SK-N-SH (cell line): ENCODE measurements at regions of chr1 and their contacts with region 1.

Region 1: DNA sequence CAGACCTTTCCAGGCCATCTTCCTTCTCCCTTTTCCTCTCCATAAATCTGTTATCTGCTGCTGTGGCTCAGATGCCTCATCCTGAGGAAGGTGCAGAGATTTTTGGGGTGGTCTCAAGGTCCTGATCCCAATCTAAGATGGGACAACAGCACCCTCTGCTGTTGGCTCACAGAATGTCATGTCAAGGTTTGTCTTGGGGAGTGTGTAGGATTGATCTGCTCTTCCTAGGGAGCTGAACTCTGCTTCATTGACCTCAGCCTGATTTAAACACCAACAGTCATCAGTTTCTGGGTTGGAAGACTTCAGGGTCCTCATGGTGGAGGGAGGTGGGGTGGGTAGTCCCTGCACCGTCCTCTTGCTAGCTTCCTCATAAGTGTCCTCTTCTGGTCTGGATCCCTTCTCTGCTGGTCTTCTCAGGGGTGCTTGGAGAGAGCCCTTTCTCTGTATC is 62.8 kb upstream of the LAX1 start:
- DNase-seq: peak; percentile 74
- H3K4me3 ChIP-seq: no peak overlapping the region
- H3K27ac ChIP-seq: peak overlapping the region in 1 of 2 experiments; percentile 47; a peak in 1 of 4 replicates
- H3K4me1 ChIP-seq: no peaks in the 10 kb centered on the region
- H3K27me3 ChIP-seq: no peaks in the 10 kb centered on the region
- CTCF ChIP-seq: peak; percentile 91
- EP300 ChIP-seq: no peak
- RAD21 ChIP-seq: peak; percentile 98

Region 2: DNA sequence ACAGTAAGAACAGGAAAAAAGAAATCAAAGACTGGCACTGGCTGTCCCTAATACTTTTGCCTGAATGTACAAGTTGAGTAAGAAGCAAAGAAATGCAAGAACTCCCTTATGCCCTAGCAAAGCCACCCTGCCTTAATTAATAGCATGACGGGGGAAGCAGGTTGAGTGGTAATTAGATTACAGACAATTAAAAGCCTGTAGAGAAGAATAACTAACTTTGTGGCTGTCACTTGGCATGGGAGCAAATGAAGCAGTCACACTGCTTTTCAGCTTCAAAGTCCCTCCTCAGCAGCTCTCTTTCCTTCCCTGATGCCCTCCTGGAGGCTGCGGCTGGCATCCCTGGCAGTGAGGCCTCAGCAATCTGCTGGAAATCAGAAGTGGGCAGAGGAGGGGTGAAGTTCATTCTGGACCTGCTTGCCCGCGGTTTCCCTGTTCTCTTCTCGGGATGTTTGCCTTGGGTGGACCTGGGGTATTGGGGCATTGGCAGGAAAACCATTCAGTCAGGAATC is 204.8 kb before region 1 on chr1:
- CTCF ChIA-PET with region 1: interaction called, 222 read pairs
- POLR2A ChIA-PET with region 1: no interaction called
- DNase-seq: no peak
- H3K4me3 ChIP-seq: no peak overlapping the region
- H3K27ac ChIP-seq: no peak overlapping the region
- H3K4me1 ChIP-seq: peaks cover 0 to 8% of the 10 kb centered on the region in 2 experiments; a peak in 1 of 4 replicates
- H3K27me3 ChIP-seq: no peaks in the 10 kb centered on the region
- CTCF ChIP-seq: no peak
- EP300 ChIP-seq: no peak
- RAD21 ChIP-seq: no peak

Region 3: GRCh38 chr1:203512830-203513611 is 189.1 kb before region 1 on chr1:
- CTCF ChIA-PET with region 1: interaction called, 222 read pairs
- POLR2A ChIA-PET with region 1: no interaction called
- DNase-seq: no peak
- H3K4me3 ChIP-seq: no peak overlapping the region
- H3K27ac ChIP-seq: peak overlapping the region; percentile 72 to 99
- H3K4me1 ChIP-seq: peaks cover 28 to 35% of the 10 kb centered on the region in 2 experiments
- H3K27me3 ChIP-seq: no peaks in the 10 kb centered on the region
- CTCF ChIP-seq: no peak
- EP300 ChIP-seq: peak in 1 of 2 experiments; percentile 95; a peak in 2 of 4 replicates
- RAD21 ChIP-seq: no peak

Region 4: GRCh38 chr1:203625628-203626019 is 76.5 kb before region 1 on chr1:
- CTCF ChIA-PET with region 1: interaction called, 88 read pairs
- POLR2A ChIA-PET with region 1: interaction called, 4 read pairs
- DNase-seq: peak; percentile 66
- H3K4me3 ChIP-seq: no peak overlapping the region
- H3K27ac ChIP-seq: peak overlapping the region; percentile 86 to 91; a peak in 3 of 4 replicates
- H3K4me1 ChIP-seq: peaks cover 25 to 28% of the 10 kb centered on the region in 2 experiments; a peak in 3 of 4 replicates
- H3K27me3 ChIP-seq: no peaks in the 10 kb centered on the region
- CTCF ChIP-seq: peak; percentile 55
- EP300 ChIP-seq: no peak
- RAD21 ChIP-seq: peak; percentile 90

Region 5: DNA sequence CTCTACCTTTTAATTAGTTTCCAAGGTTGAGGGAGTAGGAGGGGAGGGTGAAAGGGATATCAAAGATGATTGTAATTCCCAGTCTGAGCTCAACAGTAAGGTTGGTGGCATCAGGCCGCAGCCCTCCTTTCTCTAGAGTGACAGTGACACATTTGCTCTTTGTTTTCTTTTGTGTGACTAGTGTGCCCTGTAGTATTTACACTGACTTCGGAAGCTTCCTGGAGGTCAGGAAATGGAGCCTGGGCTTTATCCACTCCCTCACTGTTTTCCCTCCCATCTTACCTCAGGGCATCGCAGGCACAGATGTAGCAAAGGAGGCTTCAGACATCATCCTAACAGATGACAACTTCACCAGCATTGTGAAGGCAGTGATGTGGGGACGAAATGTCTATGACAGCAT is 18.1 kb after region 1 on chr1:
- CTCF ChIA-PET with region 1: interaction called, 12 read pairs
- POLR2A ChIA-PET with region 1: no interaction called
- DNase-seq: no peak
- H3K4me3 ChIP-seq: no peak overlapping the region
- H3K27ac ChIP-seq: no peak overlapping the region
- H3K4me1 ChIP-seq: no peaks in the 10 kb centered on the region
- H3K27me3 ChIP-seq: no peaks in the 10 kb centered on the region
- CTCF ChIP-seq: no peak
- EP300 ChIP-seq: no peak
- RAD21 ChIP-seq: no peak